Heart right ventricle (tissue), 16 donors: ENCODE measurements at regions of chr10 and their contacts with region 1.

Region 1: DNA sequence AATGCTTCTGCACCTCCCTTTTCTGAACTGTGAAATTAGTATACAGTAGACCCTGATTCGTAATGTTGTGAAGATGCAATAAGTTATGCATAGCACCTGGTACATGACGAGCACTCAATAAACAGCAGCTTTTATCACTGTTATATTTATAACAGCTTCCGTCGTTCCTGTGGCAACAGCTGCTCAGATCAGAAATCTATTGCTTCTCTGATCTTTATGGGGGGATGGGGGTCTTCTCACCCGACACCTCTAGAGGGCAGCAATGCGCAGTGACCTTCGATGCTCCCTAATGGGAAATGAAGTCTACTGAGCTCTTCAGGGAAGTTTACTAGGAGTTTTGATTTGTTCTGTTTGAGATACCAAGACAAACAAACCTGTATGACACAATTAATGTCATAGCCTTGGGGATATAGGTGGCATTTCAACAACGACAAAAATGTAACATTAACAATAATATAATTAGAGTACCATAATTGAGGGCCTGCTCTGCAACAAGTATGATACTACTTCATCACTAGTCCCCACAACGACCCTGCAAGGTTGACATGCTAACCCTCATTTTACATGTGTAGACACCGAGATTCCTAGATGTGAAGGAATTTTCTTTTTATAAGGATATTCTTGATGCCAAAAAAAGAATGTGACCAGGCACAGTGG is 289.6 kb downstream of the SFMBT2 start:
- DNase-seq: peak; percentile 49 to 56
- ATAC-seq: peak in 7 of 8 donors; percentile 49 to 78 (median 69)
- H3K4me3 ChIP-seq: no peak overlapping the region
- H3K27ac ChIP-seq: no peak overlapping the region
- H3K4me1 ChIP-seq: no peaks in the 10 kb centered on the region
- H3K27me3 ChIP-seq: peaks cover 0 to 21% (median 0%) of the 10 kb centered on the region in 7 donors
- CTCF ChIP-seq: peak; percentile 51 to 84 (median 72)

Region 2: GRCh38 chr10:7243873-7244272 is 122.6 kb after region 1 on chr10:
- intact Hi-C with region 1: loop called in 1 of 10 experiments (anchors 10 kb)
- DNase-seq: no peak
- ATAC-seq: no peak
- H3K4me3 ChIP-seq: no peak overlapping the region
- H3K27ac ChIP-seq: peak overlapping the region in 1 of 10 donors; percentile 57
- H3K4me1 ChIP-seq: peaks cover 0 to 14% (median 0%) of the 10 kb centered on the region in 9 donors
- H3K27me3 ChIP-seq: no peaks in the 10 kb centered on the region
- CTCF ChIP-seq: no peak

Region 3: DNA sequence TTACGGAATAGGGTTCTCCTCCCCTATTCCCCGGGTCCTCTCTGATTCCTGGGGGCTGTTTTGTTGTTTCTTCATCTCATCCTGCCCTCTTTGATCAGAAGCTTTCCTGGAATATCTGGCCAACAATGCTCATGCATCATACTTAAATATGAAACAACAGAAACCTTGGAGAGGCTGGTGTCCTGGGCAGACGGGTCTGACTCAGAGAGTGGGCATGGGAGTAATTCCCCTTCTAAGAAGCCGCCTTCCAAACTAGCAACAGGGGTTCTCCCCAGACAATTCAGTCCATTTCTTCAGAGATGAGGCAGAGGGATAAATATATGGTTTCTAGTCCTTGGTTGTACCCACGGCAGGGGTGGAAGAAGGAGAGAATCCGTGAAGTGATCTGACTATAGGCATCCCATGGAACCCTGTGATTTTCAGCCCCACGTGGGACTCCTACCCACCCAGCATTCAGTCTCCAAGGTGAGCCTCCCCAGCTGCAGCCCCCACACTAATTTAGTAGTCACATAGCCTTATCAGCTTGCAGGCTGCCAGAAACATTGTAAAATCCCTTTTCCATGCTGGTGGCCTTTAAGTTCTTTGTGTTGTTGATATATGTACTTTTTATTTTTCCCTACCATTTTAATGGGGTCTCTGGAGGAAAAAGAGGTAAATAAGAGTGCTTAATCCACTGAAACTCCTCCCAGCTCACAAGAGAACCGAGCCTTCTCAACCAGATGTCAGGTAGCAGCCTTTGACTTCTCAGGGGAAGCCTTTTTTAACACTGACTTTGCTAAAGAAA is 170.4 kb after region 1 on chr10:
- intact Hi-C with region 1: no loop called
- DNase-seq: no peak
- ATAC-seq: no peak
- H3K4me3 ChIP-seq: no peak overlapping the region
- H3K27ac ChIP-seq: no peak overlapping the region
- H3K4me1 ChIP-seq: peaks cover 0 to 16% (median 0%) of the 10 kb centered on the region in 9 donors
- H3K27me3 ChIP-seq: no peaks in the 10 kb centered on the region
- CTCF ChIP-seq: no peak